Mammary epithelial cell (primary cell): ENCODE measurements at regions of chr19 and their contacts with region 1.

Region 1: DNA sequence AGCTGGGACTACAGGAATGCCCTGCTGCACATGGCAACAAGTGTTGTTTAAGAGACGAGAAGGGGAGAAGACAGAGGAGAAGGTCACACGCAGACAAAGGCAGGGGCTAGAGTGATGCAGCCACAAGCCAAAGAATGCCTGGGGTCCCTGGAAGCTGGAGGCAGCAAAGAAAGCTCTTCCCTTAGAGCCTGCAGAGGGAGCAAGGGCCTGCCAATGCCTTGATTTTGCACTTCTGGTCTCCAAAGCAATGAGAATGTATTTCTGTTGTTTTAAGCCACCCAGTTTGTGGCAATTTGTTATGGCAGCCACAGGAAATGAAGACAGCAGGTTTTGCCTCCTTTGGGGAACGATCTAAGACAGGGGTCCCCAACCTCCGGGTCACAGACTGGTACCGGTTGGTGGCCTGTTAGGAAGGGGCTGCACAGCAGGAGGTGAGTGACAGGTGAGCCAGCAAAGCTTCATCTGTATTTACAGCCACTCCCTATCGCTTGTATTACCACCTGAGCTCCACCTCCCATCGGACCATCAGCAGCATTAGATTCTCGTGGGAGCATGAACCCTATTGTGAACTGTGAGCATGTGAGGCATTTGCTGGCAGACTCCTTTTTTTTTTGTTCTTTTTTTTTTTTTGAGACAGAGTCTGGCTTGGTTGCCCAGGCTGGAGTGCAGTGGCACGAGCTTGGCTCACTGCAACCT is 22.1 kb downstream of the F2RL3 start:
- DNase-seq: no peak
- H3K4me3 ChIP-seq: no peak overlapping the region
- H3K27ac ChIP-seq: no peak overlapping the region
- H3K4me1 ChIP-seq: no peaks in the 10 kb centered on the region
- H3K27me3 ChIP-seq: peaks cover 3% of the 10 kb centered on the region
- CTCF ChIP-seq: peak in 1 of 2 donors; percentile 38

Region 2: DNA sequence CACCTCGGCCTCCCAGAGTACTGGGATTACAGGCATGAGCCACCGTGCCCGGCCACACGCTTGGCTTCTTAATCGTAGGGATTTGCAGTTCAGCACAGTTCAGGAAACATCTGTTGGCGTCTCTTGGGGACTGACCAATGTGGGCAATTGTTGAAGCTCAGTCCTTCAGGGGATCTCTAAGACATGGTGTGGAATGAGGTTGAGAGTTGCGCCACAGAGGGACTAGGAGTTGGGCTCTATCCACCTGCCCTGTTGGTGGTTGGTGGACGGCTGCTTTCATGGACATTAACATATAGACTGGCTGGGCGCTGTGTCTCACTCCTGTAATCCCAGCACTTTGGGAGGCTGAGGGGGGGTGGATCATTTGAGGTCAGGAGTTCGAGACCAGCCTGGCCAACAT is 118.9 kb before region 1 on chr19:
- CTCF ChIA-PET with region 1: no interaction called
- dilution Hi-C with region 1: loop called (anchors 5 kb)
- in situ Hi-C with region 1: no loop called
- intact Hi-C with region 1: no loop called
- DNase-seq: no peak
- H3K4me3 ChIP-seq: no peak overlapping the region
- H3K27ac ChIP-seq: no peak overlapping the region
- H3K4me1 ChIP-seq: no peaks in the 10 kb centered on the region
- H3K27me3 ChIP-seq: no peaks in the 10 kb centered on the region
- CTCF ChIP-seq: no peak

Region 3: DNA sequence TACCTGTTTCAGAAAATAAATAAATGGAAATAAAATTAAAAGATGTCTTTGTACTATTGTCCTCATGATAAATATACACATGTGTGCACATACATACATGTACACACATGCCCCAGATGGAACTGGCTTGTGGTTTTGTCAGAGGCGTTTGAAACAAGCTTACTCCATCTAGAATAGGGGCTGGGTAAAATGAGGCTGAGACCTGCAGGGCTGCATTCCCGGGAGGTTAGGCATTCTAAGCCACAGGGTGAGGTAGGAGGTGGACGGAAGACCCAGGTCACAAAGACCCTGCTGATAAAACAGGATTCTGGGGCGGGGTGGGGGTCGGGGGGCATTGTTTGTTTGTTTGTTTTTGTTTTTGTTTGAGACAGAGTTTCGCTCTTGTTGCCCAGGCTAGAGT is 89.8 kb before region 1 on chr19:
- CTCF ChIA-PET with region 1: no interaction called
- dilution Hi-C with region 1: loop called (anchors 5 kb)
- in situ Hi-C with region 1: no loop called
- intact Hi-C with region 1: no loop called
- DNase-seq: peak; percentile 75
- H3K4me3 ChIP-seq: no peak overlapping the region
- H3K27ac ChIP-seq: peak overlapping the region; percentile 32
- H3K4me1 ChIP-seq: peaks cover 31% of the 10 kb centered on the region
- H3K27me3 ChIP-seq: no peaks in the 10 kb centered on the region
- CTCF ChIP-seq: no peak

Region 4: DNA sequence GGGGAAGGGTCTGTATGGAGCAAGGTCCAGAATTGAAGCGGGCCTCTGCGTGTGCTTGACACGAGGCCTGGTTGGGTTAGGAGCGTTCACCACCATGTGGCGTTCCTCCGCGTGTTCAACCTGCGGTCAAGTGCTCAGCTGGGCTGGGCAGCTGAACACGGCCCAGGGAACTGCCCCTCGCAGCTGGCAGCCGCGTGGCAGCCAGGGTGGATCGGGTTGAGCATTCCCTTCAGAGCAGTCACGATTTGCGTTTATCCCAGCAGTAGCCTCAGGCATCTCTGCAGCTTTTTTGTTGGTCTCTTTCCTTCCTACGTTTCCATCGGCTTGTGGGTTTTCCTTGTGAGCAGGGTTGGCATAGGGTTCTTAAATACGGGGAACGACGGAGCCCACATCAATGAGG is 50.8 kb before region 1 on chr19:
- CTCF ChIA-PET with region 1: no interaction called
- dilution Hi-C with region 1: loop called (anchors 5 kb)
- in situ Hi-C with region 1: no loop called
- intact Hi-C with region 1: no loop called
- DNase-seq: no peak
- H3K4me3 ChIP-seq: no peak overlapping the region
- H3K27ac ChIP-seq: no peak overlapping the region
- H3K4me1 ChIP-seq: no peaks in the 10 kb centered on the region
- H3K27me3 ChIP-seq: no peaks in the 10 kb centered on the region
- CTCF ChIP-seq: no peak

Region 5: DNA sequence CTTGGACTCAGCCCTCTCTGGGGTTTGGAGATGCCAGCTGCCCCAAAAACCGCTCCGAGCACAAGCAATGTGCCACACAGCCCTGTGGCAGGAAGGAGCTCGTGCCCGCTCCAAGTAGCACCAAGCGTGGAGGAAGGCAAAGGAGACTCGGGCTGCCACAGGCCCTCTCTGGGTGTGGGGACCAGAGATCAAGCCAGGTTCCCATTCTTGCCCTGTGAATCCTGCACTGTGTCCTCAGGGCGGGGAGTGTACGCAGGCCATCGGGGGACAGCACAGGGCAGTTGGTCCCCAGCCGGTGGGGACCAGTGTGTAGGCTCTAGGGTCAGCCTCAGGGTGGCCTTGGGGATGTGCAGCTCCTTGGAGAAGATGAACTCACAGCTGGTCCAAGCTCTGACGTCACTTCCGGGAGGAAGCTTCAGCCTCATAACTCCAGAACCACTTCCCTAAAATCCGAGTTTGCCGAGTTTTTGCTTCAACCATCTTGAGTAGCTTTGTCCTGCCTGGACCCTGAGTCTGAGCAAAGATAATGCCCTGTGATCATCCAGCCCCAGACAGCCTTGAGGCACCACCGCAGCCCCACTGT is 125.0 kb after region 1 on chr19:
- CTCF ChIA-PET with region 1: no interaction called
- dilution Hi-C with region 1: loop called (anchors 5 kb)
- in situ Hi-C with region 1: no loop called
- intact Hi-C with region 1: no loop called
- DNase-seq: no peak
- H3K4me3 ChIP-seq: no peak overlapping the region
- H3K27ac ChIP-seq: no peak overlapping the region
- H3K4me1 ChIP-seq: no peaks in the 10 kb centered on the region
- H3K27me3 ChIP-seq: no peaks in the 10 kb centered on the region
- CTCF ChIP-seq: no peak

Region 6: DNA sequence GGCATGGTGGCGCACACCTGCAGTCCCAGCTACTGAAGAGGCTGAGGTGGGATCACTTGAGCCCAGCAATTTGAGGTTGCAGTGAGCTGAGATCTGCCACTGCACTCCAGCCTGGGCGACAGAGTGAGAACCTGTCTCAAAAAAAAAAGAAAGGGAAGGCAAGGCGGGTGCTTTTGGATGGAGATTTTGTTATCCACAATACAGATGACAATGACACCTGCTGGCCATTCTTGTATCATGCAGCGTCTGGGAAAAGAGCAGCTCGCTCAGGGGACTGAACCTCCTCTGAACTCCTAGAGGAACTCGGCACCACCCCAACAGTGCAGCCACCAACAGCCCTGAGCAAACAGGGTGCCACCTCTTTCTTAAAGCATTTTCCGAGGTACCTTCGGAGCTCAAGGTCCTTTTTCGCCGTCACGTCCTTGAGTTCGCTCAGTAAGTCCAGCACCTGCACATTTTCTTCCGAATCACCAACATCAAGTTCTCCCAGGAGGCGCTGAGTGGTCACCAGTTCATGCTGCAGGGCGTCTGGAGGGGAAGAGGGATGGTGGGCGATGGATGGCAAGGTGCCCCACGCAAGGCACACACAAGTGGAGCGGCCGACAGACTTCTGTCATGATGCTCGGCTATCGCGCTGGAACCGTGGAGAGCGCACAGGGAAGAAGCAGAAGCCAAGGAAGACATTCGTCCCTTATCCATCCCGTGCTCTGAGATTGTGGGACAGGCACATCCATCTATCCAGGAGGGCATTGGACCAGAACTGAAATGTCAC is 141.7 kb after region 1 on chr19:
- CTCF ChIA-PET with region 1: no interaction called
- dilution Hi-C with region 1: no loop called
- in situ Hi-C with region 1: no loop called
- intact Hi-C with region 1: loop called (anchors 5 kb)
- DNase-seq: peak; percentile 34
- H3K4me3 ChIP-seq: no peak overlapping the region
- H3K27ac ChIP-seq: no peak overlapping the region
- H3K4me1 ChIP-seq: no peaks in the 10 kb centered on the region
- H3K27me3 ChIP-seq: no peaks in the 10 kb centered on the region
- CTCF ChIP-seq: peak; percentile 49 to 71